Common myeloid progenitor, CD34-positive (primary cell): ENCODE measurements at regions of chr11 and their contacts with region 1.

Region 1: DNA sequence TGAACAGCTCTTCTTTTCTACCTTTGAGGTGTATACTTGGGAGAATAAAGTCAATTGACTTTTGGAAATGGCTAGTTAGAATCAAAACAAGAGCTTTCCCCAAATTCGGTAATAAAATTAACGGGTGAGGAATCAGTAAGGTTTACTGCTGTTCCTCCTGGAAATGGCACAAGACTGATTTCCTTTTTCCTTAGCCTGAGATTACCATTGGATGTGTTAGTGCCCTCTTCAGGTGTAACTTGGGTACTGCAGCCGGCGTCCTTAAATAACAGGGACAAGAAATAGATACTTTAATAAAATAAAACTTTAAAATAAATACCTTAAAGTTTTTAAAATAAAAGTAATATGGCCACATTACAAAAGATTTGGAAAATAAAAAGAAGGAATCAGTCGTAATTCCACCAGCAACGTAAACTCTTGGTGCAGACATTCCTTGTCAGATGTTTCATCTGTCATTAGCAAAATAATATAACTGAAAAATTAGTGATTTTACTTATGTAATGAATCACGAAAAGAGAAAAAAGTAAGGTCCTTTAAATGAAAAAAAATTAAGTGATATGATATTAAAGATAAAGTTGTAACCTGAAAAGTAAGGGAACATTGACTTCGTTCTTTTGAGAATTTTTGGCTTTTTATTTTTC is 29.7 kb downstream of the ZFTA start:
- DNase-seq: peak; percentile 76 to 82 (median 76)
- H3K4me3 ChIP-seq: no peak overlapping the region
- H3K27ac ChIP-seq: no peak overlapping the region
- H3K4me1 ChIP-seq: peaks cover 0 to 10% (median 6%) of the 10 kb centered on the region in 4 experiments
- H3K27me3 ChIP-seq: no peaks in the 10 kb centered on the region

Region 2: GRCh38 chr11:63635762-63636465 is 102.9 kb before region 1 on chr11:
- CTCF ChIA-PET with region 1: interaction called, 64 read pairs
- POLR2A ChIA-PET with region 1: no interaction called
- DNase-seq: peak; percentile 58 to 81 (median 75)
- H3K4me3 ChIP-seq: no peak overlapping the region
- H3K27ac ChIP-seq: no peak overlapping the region
- H3K4me1 ChIP-seq: no peaks in the 10 kb centered on the region
- H3K27me3 ChIP-seq: no peaks in the 10 kb centered on the region

Region 3: GRCh38 chr11:63671322-63672155 is 67.3 kb before region 1 on chr11 and contains the start of gene ATL3:
- CTCF ChIA-PET with region 1: interaction called, 20 read pairs
- POLR2A ChIA-PET with region 1: no interaction called
- DNase-seq: peak; percentile 94 to 96 (median 96)
- H3K4me3 ChIP-seq: peak within 1 kb of the TSS; percentile 68 to 88 (median 73)
- H3K27ac ChIP-seq: peak within 1 kb of the TSS; percentile 46 to 73
- H3K4me1 ChIP-seq: peaks cover 6 to 17% (median 14%) of the 10 kb centered on the region in 4 experiments
- H3K27me3 ChIP-seq: no peaks in the 10 kb centered on the region

Region 4: DNA sequence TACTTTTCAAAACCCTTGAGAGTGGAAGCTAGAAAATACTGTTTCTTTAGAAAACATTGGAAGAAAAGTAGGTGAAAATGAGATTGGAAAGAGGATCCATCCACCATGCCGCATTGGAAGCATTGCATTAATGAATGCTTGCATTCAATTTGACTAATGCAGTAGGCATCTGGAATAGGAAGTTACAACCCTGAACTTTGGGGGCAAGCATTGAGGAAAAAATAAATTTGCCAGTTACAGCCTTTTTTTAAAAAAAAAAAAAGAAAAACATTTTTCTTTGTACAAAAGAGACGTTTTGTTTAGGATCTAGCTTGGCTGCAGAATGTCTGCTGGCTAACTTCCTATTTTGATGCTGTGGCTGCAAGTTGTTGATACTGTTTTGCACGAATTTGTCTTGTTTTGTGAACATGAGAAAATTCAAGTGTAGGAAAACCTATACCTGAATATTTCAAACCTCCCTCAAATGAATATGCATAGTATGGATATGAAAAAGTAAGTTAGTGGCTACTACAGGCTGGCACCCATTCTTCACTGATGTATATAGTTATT is 29.4 kb before region 1 on chr11:
- CTCF ChIA-PET with region 1: no interaction called
- POLR2A ChIA-PET with region 1: no interaction called
- DNase-seq: peak in 2 of 3 donors; percentile 41 to 50
- H3K4me3 ChIP-seq: peak overlapping the region in 1 of 7 experiments; percentile 33
- H3K27ac ChIP-seq: no peak overlapping the region
- H3K4me1 ChIP-seq: peaks cover 2 to 21% (median 9%) of the 10 kb centered on the region in 4 experiments
- H3K27me3 ChIP-seq: no peaks in the 10 kb centered on the region

Region 5: GRCh38 chr11:63719977-63720376 is 18.9 kb before region 1 on chr11:
- CTCF ChIA-PET with region 1: interaction called, 10 read pairs
- POLR2A ChIA-PET with region 1: no interaction called
- DNase-seq: no peak
- H3K4me3 ChIP-seq: no peak overlapping the region
- H3K27ac ChIP-seq: no peak overlapping the region
- H3K4me1 ChIP-seq: no peaks in the 10 kb centered on the region
- H3K27me3 ChIP-seq: no peaks in the 10 kb centered on the region

Region 6: GRCh38 chr11:63756919-63757761 is 18.3 kb after region 1 on chr11:
- CTCF ChIA-PET with region 1: no interaction called
- POLR2A ChIA-PET with region 1: no interaction called
- DNase-seq: no peak
- H3K4me3 ChIP-seq: no peak overlapping the region
- H3K27ac ChIP-seq: no peak overlapping the region
- H3K4me1 ChIP-seq: no peaks in the 10 kb centered on the region
- H3K27me3 ChIP-seq: no peaks in the 10 kb centered on the region

Region 7: GRCh38 chr11:63768237-63769043 is 29.6 kb after region 1 on chr11 and contains the start of gene ZFTA:
- CTCF ChIA-PET with region 1: interaction called, 21 read pairs
- POLR2A ChIA-PET with region 1: no interaction called
- DNase-seq: peak; percentile 52 to 77 (median 72)
- H3K4me3 ChIP-seq: peak within 1 kb of the TSS; percentile 77 to 93 (median 87)
- H3K27ac ChIP-seq: peak within 1 kb of the TSS; percentile 40 to 81
- H3K4me1 ChIP-seq: peaks cover 0 to 31% (median 26%) of the 10 kb centered on the region in 4 experiments
- H3K27me3 ChIP-seq: peaks cover 0 to 29% (median 16%) of the 10 kb centered on the region in 5 experiments